HepG2 (cell line): ENCODE measurements at regions of chr12 and their contacts with region 1.

Region 1: GRCh38 chr12:55973598-55974307 is at the start of gene RAB5B:
- DNase-seq: peak; percentile 100
- ATAC-seq: peak; percentile 95
- H3K4me3 ChIP-seq: peak within 1 kb of the TSS; percentile 90 to 99 (median 96)
- H3K27ac ChIP-seq: peak within 1 kb of the TSS; percentile 82
- H3K4me1 ChIP-seq: peaks cover 44% of the 10 kb centered on the region
- H3K27me3 ChIP-seq: no peaks in the 10 kb centered on the region
- CTCF ChIP-seq: 0 out of 2 replicates have a peak, but pooled peaks have one; percentile 10
- EP300 ChIP-seq: no peak
- POLR2A ChIP-seq: peak; percentile 93
- RAD21 ChIP-seq: peak; percentile 42; the same call in 1 of the 2 replicates
- total RNA-seq, gene RAB5B: 26.0 and 33.1 TPM in 2 replicates

Region 2: GRCh38 chr12:55607821-55608594 is 365.7 kb before region 1 on chr12:
- CTCF ChIA-PET with region 1: no interaction called
- POLR2A ChIA-PET with region 1: no interaction called
- in situ Hi-C with region 1: no loop called
- intact Hi-C with region 1: no loop called
- DNase-seq: no peak
- ATAC-seq: no peak
- H3K4me3 ChIP-seq: no peak overlapping the region
- H3K27ac ChIP-seq: no peak overlapping the region
- H3K4me1 ChIP-seq: peaks cover 14% of the 10 kb centered on the region; the same call in 1 of the 2 replicates
- H3K27me3 ChIP-seq: no peaks in the 10 kb centered on the region
- CTCF ChIP-seq: no peak
- EP300 ChIP-seq: no peak
- POLR2A ChIP-seq: no peak
- RAD21 ChIP-seq: no peak

Region 3: DNA sequence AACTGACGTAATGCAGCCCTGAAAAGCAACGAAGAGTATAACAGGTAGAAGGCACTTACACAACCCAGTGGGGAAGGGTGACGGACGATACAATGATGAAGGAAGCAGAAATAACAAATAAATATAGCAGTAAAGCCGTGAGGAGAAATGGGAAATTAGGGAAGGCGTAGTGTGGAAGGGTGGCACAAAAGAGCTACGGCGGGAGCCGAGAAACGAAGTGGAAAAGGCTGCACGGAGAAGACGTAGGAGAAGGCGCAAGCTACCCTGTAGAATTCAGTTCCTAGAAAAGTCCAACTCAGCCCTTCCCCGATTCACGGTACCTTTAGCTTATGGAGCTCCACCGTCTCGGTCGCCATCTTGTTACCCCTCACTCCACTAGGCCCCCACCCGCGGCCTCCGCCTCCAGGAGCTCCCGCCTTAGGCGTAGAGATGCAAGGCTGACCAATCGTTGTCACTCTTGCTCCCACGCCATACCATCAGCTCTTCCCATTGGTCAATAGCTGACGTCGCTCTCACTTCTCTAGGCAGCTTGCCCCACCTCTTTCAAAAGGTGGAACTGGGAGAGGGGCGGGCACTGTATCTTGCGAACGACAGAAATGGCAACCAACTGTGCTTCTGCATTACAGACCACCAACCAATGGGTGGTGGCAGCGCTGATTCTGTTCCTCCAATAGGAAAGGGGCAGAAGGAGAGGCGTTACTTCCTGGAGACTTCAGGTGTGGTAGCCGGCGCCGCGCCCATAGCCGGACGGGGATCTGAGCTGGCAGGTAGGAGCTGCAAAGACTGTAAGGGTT is 156.2 kb before region 1 on chr12 and contains the starts of genes ORMDL2 and SARNP:
- CTCF ChIA-PET with region 1: no interaction called
- POLR2A ChIA-PET with region 1: interaction called, 26 read pairs
- in situ Hi-C with region 1: no loop called
- intact Hi-C with region 1: no loop called
- DNase-seq: peak; percentile 100
- ATAC-seq: peak; percentile 97
- H3K4me3 ChIP-seq: peak within 1 kb of the TSS; percentile 81 to 93 (median 82)
- H3K27ac ChIP-seq: peak within 1 kb of the TSS; percentile 79
- H3K4me1 ChIP-seq: peaks cover 56% of the 10 kb centered on the region
- H3K27me3 ChIP-seq: no peaks in the 10 kb centered on the region; a peak in 1 of 5 replicates
- CTCF ChIP-seq: no peak
- EP300 ChIP-seq: 0 out of 4 replicates have a peak, but pooled peaks of 1 of the 2 experiments have one; percentile 6
- POLR2A ChIP-seq: peak; percentile 70 to 88
- RAD21 ChIP-seq: no peak
- total RNA-seq, gene ORMDL2: 14.8 and 28.6 TPM in 2 replicates
- total RNA-seq, gene SARNP: 95.4 and 137 TPM in 2 replicates

Region 4: DNA sequence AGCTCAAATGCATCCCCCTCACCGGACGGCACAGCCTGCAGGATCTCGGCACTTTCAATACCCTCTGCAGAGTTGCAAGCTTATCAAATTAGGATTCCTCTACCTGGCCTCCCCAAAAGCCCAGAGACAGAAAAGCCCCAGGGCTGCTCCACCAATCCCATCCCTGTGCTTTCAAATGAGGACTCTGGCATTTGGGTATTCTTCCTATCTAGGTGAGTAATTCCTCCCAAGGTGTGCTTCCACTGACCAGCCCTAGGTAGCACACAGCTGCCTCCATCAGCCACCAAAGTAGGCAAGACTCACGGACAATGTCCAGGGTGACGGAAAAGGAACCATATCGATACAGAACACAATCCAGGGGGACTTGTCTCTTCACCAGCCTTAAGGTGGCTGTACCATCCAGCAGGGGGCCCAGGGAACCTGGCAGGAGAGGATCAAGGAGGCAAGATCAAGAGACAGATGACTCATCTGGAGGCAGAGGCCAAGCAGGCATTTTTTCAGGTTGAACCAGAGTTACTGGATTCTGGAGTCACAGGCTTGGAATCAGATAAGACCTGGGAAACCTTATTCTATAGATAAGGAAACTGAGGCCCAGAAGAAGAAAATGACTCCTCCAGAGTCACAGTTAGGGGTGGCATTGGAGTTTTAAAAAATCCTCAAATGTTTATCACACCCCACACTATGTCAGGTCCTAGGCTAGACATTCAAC is 17.8 kb before region 1 on chr12:
- CTCF ChIA-PET with region 1: interaction called, 4 read pairs
- POLR2A ChIA-PET with region 1: interaction called, 23 read pairs
- in situ Hi-C with region 1: no loop called
- intact Hi-C with region 1: no loop called
- DNase-seq: peak; percentile 48
- ATAC-seq: peak; percentile 78
- H3K4me3 ChIP-seq: no peak overlapping the region
- H3K27ac ChIP-seq: no peak overlapping the region
- H3K4me1 ChIP-seq: peaks cover 12% of the 10 kb centered on the region
- H3K27me3 ChIP-seq: no peaks in the 10 kb centered on the region
- CTCF ChIP-seq: peak; percentile 44; the same call in 1 of the 2 replicates
- EP300 ChIP-seq: no peak
- POLR2A ChIP-seq: no peak
- RAD21 ChIP-seq: no peak

Region 5: DNA sequence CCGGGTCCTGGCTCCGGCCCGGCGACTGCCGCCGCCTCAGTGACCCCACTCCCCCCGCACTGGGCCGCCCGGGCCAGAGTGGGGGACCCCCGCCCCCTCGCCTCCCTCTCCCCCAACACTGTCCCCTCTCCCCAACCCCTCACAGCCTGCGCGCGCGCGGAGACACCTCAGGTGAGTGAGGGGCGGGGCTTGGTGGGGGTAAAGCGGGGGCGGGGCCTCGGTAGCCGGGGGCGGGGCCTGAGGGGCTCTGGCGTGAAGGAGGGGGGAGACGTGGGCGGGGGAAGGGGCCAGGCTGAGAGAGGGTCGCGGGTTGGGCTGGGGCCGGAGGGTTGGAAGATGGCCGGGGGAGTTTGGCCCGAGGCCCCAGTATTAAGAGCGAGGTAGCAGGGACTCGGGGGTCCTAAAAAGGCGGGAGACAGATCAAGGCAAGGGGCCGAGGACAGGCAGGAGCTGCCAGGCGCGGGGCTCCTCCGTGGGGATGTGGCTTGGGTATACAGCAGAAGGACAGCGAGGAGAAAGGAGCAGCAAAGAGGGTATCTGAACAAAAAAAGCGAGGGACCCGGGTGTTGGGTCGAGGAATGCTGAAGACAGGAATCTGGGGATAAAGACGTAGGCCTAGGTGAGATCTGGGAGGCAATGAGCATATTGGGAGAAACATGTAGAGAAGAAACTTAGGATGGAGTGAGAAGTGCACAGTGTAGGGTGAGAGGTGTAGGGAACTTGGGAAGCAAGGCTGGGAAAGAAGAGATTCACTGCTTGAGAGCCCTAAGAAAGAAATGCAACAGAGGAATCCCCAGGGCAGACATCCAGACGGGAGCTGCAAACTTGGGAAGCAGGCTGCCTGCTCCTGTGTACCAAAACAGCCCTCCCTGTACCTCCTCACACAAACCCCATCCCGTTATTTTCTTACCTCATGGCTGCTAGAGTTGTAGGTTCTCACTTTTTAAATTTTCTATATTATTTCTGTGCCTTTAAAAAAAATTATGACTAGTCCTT is 34.1 kb after region 1 on chr12:
- CTCF ChIA-PET with region 1: no interaction called
- POLR2A ChIA-PET with region 1: interaction called, 17 read pairs
- in situ Hi-C with region 1: no loop called
- intact Hi-C with region 1: no loop called
- DNase-seq: no peak
- ATAC-seq: peak; percentile 33
- H3K4me3 ChIP-seq: peak overlapping the region; percentile 59 to 84 (median 69)
- H3K27ac ChIP-seq: peak overlapping the region; percentile 73
- H3K4me1 ChIP-seq: peaks cover 75% of the 10 kb centered on the region
- H3K27me3 ChIP-seq: no peaks in the 10 kb centered on the region; a peak in 1 of 5 replicates
- CTCF ChIP-seq: no peak
- EP300 ChIP-seq: no peak
- POLR2A ChIP-seq: no peak; a peak in 1 of 4 replicates
- RAD21 ChIP-seq: no peak

Region 6: DNA sequence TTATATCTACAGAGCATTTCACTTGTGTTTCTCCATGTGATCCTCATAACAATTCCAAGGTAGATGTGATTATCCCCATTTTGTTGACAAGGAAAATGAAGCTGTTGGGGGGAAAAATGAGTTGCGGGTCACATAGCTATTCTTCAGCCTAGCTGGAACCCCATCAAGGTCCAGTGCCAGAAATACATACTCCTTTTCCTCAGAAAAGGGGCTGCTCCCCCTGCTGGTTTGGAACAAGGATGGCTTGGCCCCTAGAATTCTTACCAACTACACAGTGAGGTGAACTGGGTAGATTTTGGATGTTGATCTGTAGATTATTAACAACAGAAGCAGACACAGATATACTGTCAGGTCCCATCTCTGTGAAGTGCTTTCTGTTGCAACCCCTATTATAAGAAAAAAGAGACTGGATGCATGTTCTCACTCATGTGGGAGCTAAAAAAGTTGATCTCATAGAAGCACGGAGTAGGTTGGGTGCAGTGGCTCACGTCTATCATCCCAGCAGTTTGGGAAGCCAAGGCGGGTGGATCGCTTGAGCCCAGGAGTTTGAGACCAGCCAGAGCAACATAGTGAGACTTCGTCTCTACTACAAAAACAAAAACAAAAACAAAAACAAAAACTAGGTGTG is 56.0 kb after region 1 on chr12:
- CTCF ChIA-PET with region 1: no interaction called
- POLR2A ChIA-PET with region 1: interaction called, 8 read pairs
- in situ Hi-C with region 1: loop called (anchors 10 kb)
- intact Hi-C with region 1: no loop called
- DNase-seq: peak; percentile 71
- ATAC-seq: peak; percentile 94
- H3K4me3 ChIP-seq: no peak overlapping the region
- H3K27ac ChIP-seq: no peak overlapping the region
- H3K4me1 ChIP-seq: peaks cover 13% of the 10 kb centered on the region
- H3K27me3 ChIP-seq: no peaks in the 10 kb centered on the region
- CTCF ChIP-seq: peak; percentile 82
- EP300 ChIP-seq: no peak
- POLR2A ChIP-seq: no peak
- RAD21 ChIP-seq: peak; percentile 77

Region 7: GRCh38 chr12:56152318-56153033 is 178.7 kb after region 1 on chr12 and contains the start of gene MYL6B:
- CTCF ChIA-PET with region 1: no interaction called
- POLR2A ChIA-PET with region 1: no interaction called
- in situ Hi-C with region 1: no loop called
- intact Hi-C with region 1: no loop called
- DNase-seq: peak; percentile 83
- ATAC-seq: peak; percentile 89
- H3K4me3 ChIP-seq: peak within 1 kb of the TSS; percentile 79 to 86 (median 82)
- H3K27ac ChIP-seq: peak within 1 kb of the TSS; percentile 89
- H3K4me1 ChIP-seq: peaks cover 41% of the 10 kb centered on the region
- H3K27me3 ChIP-seq: no peaks in the 10 kb centered on the region; a peak in 1 of 5 replicates
- CTCF ChIP-seq: peak; percentile 25; the same call in 1 of the 2 replicates
- EP300 ChIP-seq: peak; percentile 29 to 30; a peak in 2 of 4 replicates
- POLR2A ChIP-seq: peak; percentile 66 to 81; a peak in 2 of 4 replicates
- RAD21 ChIP-seq: no peak
- total RNA-seq, gene MYL6B: 75.7 and 76.5 TPM in 2 replicates